Posterior cingulate gyrus (tissue), 11 donors: ENCODE measurements at regions of chr5 and their contacts with region 1.

Region 1: DNA sequence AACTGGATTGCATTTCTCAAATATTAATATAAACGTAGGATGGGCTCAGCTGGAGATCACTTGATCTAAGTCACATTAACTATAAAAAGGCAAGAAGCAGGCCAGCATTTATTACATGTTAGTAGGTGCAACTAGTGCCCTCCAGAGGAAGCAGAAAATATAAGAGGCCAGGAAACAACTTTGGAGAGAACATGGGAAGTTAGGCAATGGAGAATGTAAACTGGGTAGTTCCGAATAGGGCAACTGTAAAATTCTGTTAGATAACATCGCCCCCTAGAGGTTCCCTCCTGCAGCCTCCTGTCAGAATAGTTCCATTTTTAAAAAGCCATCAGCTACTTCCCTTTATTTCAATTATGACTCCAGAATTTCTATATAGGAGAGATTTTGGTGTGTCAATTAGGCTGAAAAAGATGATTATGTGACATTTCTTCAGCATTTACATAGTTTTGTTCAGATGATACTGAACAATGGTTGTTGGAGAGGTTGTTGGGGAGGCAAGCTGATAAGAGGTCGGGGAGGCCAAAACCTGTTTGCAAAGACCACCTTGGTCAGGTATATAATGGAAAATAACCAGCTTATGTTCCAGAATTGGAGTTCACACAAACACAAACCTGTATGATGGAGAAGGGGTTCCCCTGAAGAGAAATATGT is 22.4 kb downstream of the CCL28 start:
- DNase-seq: peak in 5 of 10 donors; percentile 25 to 56 (median 38)

Region 2: DNA sequence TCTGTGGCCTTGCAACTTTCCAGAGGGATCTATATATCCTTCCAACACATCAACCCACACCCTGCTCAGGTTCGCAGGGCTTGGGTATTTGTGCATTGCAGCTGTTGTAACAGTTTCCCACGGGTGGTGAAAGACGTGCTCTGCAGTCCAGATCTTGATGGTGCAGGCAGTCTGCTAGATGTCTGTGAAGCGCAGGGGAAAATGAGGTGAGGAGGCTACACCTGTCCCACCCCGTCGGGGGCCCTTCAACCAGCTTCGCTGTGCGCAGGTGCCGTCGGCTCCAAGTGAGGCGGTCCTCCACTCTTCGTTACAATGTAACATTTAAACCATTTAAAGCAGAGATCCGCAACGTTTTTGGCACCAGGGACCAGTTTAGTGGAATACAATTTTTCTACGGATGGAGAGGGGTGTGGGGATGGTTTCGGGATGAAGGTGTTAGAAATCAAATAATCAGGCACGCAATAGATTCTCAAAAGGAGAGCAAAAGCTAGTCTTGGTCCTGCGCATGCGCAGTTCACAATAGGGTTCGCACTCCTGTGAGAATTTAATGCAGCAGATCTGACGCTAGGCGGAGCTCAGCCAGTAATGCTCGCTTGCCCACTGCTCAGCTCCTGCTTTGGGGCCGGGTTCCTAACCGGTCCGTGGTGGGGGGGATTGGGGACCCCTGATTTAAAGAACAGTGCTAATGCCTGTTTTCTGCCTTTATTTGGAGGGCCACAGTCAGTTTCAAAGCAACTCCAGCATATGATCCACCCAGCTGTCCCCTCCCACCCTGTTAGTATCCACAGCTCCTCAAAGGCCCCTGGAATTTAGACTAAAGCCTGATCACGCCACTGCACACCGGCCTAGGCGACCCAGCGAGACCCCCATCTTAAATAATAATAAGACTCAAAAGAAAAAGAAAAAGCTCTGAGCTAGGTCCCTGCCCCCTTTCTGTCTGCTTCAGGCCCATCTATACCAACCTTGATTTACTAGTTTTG is 481.0 kb before region 1 on chr5:
- intact Hi-C with region 1: loop called (anchors 1 kb)
- DNase-seq: peak; percentile 85 to 98 (median 90)

Region 3: DNA sequence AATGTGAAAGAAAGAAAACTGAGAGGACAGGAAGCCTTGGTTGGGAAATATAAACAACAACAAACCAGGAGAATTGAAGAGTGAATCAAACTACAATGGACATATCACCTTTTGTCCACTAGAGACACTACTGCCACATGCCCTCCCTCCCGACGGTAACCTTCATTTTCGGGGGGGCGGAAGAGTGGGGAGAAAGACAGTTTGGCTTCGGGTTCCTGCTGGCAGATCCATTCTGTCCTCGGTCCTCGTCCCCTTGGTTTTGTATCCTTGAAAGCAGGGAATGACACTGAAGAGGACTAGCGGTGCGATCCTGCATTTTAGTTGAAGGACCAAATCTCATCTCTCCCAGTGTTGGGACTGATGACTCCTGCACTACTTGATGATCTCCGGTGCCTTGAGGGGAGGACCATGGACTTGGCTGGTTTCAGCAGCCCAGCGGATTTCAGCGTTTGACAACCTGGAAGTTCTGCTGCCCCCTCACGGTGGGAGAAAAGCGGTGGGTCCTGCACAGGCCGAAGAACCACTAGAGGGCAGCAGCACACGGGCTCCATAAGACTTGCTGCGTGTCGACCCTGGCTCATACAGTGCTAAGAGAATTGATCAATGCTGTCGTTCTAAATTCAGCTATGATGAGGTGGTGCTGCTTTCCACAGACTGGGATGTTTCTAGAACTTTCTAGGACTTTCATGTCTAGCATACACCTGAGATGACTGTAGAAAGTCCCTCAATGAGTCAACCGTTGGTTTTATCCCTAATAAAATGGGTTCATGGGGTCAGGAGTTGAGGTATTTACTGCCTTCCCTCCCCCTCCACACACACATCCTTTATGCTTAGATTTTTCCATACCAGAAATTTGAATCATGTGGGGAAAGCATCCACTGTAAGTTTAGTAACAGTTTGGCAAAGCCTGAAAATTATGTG is 284.2 kb before region 1 on chr5:
- intact Hi-C with region 1: loop called (anchors 5 kb)
- DNase-seq: peak; percentile 61 to 97 (median 85)

Region 4: DNA sequence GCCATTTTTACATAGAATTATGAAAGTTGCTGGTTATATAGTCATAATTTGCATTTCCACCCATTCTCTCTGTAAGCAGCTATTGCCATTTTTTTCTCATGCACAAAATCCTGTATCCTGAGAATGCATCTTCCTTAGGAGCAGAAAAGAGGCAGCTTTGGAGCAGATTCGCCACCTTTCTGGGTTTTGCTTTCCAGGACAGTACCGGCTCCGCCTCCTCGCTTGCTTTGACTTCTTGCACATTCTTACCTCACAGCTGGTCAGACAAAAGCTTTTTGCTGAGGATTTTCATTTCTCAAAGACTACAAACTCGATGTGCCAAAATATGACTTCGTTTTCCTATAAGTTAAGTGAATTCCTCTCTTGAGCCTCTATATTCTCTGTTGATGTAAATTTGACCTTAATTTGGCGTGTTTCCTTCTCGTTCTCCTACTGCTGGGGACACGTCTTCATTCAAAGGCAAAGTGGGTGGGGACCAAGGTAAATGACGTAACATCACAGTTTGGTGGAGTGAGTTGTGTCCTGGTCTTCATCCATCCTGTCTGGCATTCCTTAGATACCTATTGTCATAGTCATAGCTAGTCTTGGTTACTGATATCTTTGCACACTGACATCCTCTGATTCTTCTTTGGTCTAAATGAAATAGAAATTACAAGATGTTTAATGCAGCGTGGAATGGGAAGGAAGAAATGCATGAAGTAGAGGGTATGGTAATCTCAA is 321.5 kb after region 1 on chr5:
- intact Hi-C with region 1: no loop called
- DNase-seq: no peak